GM12878 (cell line): ENCODE measurements at regions of chr11 and their contacts with region 1.

Region 1: GRCh38 chr11:88164320-88164719 is 10.9 kb downstream of the RAB38 start:
- DNase-seq: peak; percentile 32
- ATAC-seq: peak; percentile 91
- H3K4me3 ChIP-seq: no peak overlapping the region
- H3K27ac ChIP-seq: no peak overlapping the region
- H3K4me1 ChIP-seq: peaks cover 3% of the 10 kb centered on the region
- H3K27me3 ChIP-seq: no peaks in the 10 kb centered on the region
- CTCF ChIP-seq: no peak
- EP300 ChIP-seq: peak in 1 of 2 experiments; percentile 30; a peak in 1 of 4 replicates
- POLR2A ChIP-seq: no peak
- RAD21 ChIP-seq: no peak

Region 2: GRCh38 chr11:88089134-88089533 is 75.2 kb before region 1 on chr11:
- CTCF ChIA-PET with region 1: no interaction called
- POLR2A ChIA-PET with region 1: no interaction called
- RAD21 ChIA-PET with region 1: no interaction called
- SMC1A ChIA-PET with region 1: no interaction called
- in situ Hi-C with region 1: no loop called
- intact Hi-C with region 1: no loop called
- DNase-seq: no peak
- ATAC-seq: no peak
- H3K4me3 ChIP-seq: no peak overlapping the region
- H3K27ac ChIP-seq: no peak overlapping the region
- H3K4me1 ChIP-seq: no peaks in the 10 kb centered on the region
- H3K27me3 ChIP-seq: no peaks in the 10 kb centered on the region
- CTCF ChIP-seq: no peak
- EP300 ChIP-seq: no peak
- POLR2A ChIP-seq: no peak
- RAD21 ChIP-seq: no peak

Region 3: GRCh38 chr11:88146106-88146505 is 18.2 kb before region 1 on chr11:
- CTCF ChIA-PET with region 1: no interaction called
- POLR2A ChIA-PET with region 1: no interaction called
- RAD21 ChIA-PET with region 1: no interaction called
- SMC1A ChIA-PET with region 1: interaction called, 15 read pairs
- in situ Hi-C with region 1: no loop called
- intact Hi-C with region 1: no loop called
- DNase-seq: no peak
- ATAC-seq: no peak
- H3K4me3 ChIP-seq: no peak overlapping the region
- H3K27ac ChIP-seq: no peak overlapping the region
- H3K4me1 ChIP-seq: no peaks in the 10 kb centered on the region
- H3K27me3 ChIP-seq: no peaks in the 10 kb centered on the region
- CTCF ChIP-seq: no peak
- EP300 ChIP-seq: no peak
- POLR2A ChIP-seq: no peak
- RAD21 ChIP-seq: no peak

Region 4: GRCh38 chr11:88266919-88267318 is 102.6 kb after region 1 on chr11:
- CTCF ChIA-PET with region 1: no interaction called
- POLR2A ChIA-PET with region 1: no interaction called
- RAD21 ChIA-PET with region 1: no interaction called
- SMC1A ChIA-PET with region 1: no interaction called
- in situ Hi-C with region 1: no loop called
- intact Hi-C with region 1: no loop called
- DNase-seq: no peak
- ATAC-seq: peak; percentile 88
- H3K4me3 ChIP-seq: no peak overlapping the region
- H3K27ac ChIP-seq: no peak overlapping the region
- H3K4me1 ChIP-seq: peaks cover 4% of the 10 kb centered on the region
- H3K27me3 ChIP-seq: no peaks in the 10 kb centered on the region
- CTCF ChIP-seq: no peak
- EP300 ChIP-seq: no peak
- POLR2A ChIP-seq: no peak
- RAD21 ChIP-seq: no peak